ENCODE measurements at regions of chr14 and their contacts with region 1.

Region 1: DNA sequence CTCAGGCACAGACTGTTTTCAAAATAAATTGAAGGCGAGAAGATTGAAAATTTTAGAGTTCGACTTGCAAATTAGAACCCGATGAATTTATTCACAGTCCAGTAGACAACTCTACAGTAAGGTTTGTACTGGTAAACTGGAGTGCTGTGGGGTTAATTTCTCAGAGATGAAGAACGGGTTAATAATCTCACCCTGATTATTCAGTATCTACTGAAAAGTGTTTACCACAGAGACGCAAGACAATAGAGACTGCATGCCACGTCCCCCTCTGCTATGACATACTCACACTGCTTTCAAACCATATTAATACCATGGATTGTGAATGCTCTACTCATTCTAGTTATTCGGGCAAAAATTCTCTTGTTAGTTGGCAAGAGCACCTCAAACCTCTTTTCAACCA is 36.1 kb downstream of the CFL2 start:
- DNase-seq: no peak
- H3K4me3 Mint-ChIP-seq: no peak overlapping the region
- H3K27ac Mint-ChIP-seq: no peak overlapping the region
- H3K4me1 Mint-ChIP-seq: no peaks in the 10 kb centered on the region
- H3K27me3 Mint-ChIP-seq: no peaks in the 10 kb centered on the region
- CTCF ChIP-seq: no peak

Region 2: DNA sequence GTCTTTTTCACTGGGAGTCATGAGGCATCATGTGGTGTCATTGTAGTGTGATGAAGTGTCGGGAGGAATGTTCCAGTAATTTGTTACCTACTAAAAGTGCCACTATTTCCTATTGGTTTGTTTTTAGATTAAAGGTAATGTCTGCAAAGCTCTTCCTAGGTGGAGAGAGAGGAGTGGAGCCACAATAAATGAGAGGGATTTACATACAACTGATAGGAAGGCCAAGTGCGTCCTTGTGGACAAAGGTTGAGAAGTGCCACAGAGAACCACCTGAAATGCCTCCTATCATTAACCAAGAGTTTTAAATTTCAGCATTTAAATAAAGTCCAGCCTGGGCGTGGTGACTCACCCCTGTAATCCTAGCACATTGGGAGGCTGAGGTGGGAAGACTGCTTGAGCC is 45.9 kb before region 1 on chr14:
- CTCF ChIA-PET with region 1: no interaction called
- intact Hi-C with region 1: no loop called
- DNase-seq: no peak
- H3K4me3 Mint-ChIP-seq: no peak overlapping the region
- H3K27ac Mint-ChIP-seq: no peak overlapping the region
- H3K4me1 Mint-ChIP-seq: no peaks in the 10 kb centered on the region
- H3K27me3 Mint-ChIP-seq: no peaks in the 10 kb centered on the region
- CTCF ChIP-seq: no peak

Region 3: GRCh38 chr14:34699873-34700621 is 21.7 kb after region 1 on chr14:
- CTCF ChIA-PET with region 1: no interaction called
- intact Hi-C with region 1: no loop called
- DNase-seq: no peak
- H3K4me3 Mint-ChIP-seq: no peak overlapping the region
- H3K27ac Mint-ChIP-seq: no peak overlapping the region
- H3K4me1 Mint-ChIP-seq: peaks cover 12% of the 10 kb centered on the region
- H3K27me3 Mint-ChIP-seq: no peaks in the 10 kb centered on the region
- CTCF ChIP-seq: no peak

Region 4: DNA sequence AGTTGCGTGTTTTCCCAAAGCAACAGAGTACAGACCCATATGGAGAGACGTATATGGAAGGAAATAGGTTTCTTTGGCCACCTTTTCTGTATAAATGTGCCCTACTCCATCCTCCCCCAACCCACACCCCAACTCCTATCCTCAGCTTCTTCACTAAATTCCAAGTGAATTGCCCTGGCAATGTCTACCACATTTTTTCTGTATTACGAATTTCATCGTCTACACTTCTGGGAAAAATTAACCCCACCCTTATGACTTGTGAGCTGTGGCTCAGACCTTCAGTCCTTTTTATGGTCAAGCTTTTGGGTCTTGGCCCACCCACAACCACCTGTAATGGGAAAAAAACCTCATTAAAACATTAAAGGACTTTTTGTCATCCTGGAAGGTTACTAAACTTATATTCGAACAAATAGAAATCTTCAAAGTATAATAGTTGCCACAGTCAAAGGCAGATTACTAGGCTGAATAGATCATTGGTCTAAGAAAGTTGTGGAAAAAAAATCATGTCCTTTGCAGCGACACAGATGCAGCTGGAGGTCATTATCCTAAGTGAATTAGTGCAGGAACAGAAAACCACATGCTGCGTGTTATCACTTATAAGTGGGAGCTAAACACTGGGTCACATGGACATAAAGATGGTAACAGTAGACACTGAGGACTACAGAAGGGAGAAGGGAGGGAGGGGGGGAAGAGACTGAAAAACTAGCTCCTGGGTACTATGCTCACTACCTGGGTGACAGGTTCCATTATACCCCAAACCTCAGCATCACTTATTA is 741.9 kb after region 1 on chr14:
- CTCF ChIA-PET with region 1: no interaction called
- intact Hi-C with region 1: loop called (anchors 10 kb)
- DNase-seq: no peak
- H3K4me3 Mint-ChIP-seq: no peak overlapping the region
- H3K27ac Mint-ChIP-seq: no peak overlapping the region
- H3K4me1 Mint-ChIP-seq: peaks cover 25% of the 10 kb centered on the region
- H3K27me3 Mint-ChIP-seq: no peaks in the 10 kb centered on the region
- CTCF ChIP-seq: no peak

Measured in Calu3 (cell line).